Mammary epithelial cell (primary cell): ENCODE measurements at regions of chr11 and their contacts with region 1.

Region 1: GRCh38 chr11:2151500-2152257 is 9.3 kb downstream of the INS start:
- DNase-seq: peak; percentile 36
- H3K4me3 ChIP-seq: no peak overlapping the region
- H3K27ac ChIP-seq: no peak overlapping the region
- H3K4me1 ChIP-seq: no peaks in the 10 kb centered on the region
- H3K27me3 ChIP-seq: peaks cover 32% of the 10 kb centered on the region
- CTCF ChIP-seq: peak; percentile 81

Region 2: GRCh38 chr11:1598816-1599215 is 552.9 kb before region 1 on chr11:
- CTCF ChIA-PET with region 1: interaction called, 6 read pairs
- dilution Hi-C with region 1: no loop called
- in situ Hi-C with region 1: no loop called
- intact Hi-C with region 1: loop called (anchors 1 kb)
- DNase-seq: no peak
- H3K4me3 ChIP-seq: no peak overlapping the region
- H3K27ac ChIP-seq: no peak overlapping the region
- H3K4me1 ChIP-seq: no peaks in the 10 kb centered on the region
- H3K27me3 ChIP-seq: peaks cover 2% of the 10 kb centered on the region
- CTCF ChIP-seq: no peak

Region 3: DNA sequence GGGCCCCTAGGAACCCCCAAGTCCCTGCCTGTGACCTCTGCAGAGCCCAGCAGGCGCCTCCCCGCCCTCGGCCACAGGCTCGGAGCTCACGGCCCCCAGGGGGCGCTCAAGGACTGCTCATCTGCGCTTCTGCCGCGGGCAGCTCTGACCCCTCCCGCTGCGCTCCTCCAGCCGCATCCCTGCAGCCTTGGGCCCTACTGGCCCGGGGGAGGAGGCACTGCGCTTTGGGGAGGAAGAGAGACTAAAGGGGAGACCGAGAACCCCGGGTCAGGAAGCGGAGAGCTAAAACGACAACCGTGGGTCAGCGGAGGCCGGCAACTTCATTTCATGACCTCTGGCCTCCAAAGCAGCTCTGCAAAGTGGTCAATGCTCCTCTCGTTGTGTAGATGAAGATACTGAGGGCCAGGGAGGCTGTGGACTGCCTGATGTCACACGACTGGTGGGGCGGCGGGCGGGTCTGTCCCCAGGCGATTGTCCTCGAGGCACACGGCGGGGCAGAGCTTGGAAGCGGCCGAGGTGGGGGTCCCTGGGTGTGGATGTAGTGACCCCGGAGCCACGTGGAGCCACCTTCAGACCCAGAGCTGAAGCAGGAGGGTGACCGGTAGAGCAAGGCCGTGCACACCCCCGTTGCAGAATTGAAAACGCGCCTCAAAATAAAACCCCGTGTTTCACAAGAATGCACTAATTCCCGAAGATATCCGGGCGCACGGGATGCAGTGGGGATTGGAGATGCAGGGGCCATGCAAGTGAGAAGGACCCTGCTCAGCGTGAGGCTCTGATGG is 457.4 kb before region 1 on chr11:
- CTCF ChIA-PET with region 1: interaction called, 5 read pairs
- dilution Hi-C with region 1: no loop called
- in situ Hi-C with region 1: loop called in 1 of 2 experiments (anchors 25 kb)
- intact Hi-C with region 1: loop called (anchors 1 kb)
- DNase-seq: peak; percentile 58
- H3K4me3 ChIP-seq: peak overlapping the region in 2 of 3 experiments; percentile 49 to 54
- H3K27ac ChIP-seq: no peak overlapping the region
- H3K4me1 ChIP-seq: peaks cover 14% of the 10 kb centered on the region
- H3K27me3 ChIP-seq: peaks cover 8% of the 10 kb centered on the region
- CTCF ChIP-seq: peak; percentile 72 to 92

Region 4: GRCh38 chr11:1852877-1853276 is 298.8 kb before region 1 on chr11 and contains the start of gene LSP1:
- CTCF ChIA-PET with region 1: no interaction called
- dilution Hi-C with region 1: no loop called
- in situ Hi-C with region 1: loop called in 1 of 2 experiments (anchors 10 kb)
- intact Hi-C with region 1: no loop called
- DNase-seq: no peak
- H3K4me3 ChIP-seq: no peak within 1 kb of the TSS
- H3K27ac ChIP-seq: no peak within 1 kb of the TSS
- H3K4me1 ChIP-seq: no peaks in the 10 kb centered on the region
- H3K27me3 ChIP-seq: no peaks in the 10 kb centered on the region
- CTCF ChIP-seq: no peak
- total RNA-seq, gene LSP1: 0.17 to 2.0 TPM

Region 5: GRCh38 chr11:2036863-2037486 is 114.7 kb before region 1 on chr11:
- CTCF ChIA-PET with region 1: interaction called, 26 read pairs
- dilution Hi-C with region 1: no loop called
- in situ Hi-C with region 1: no loop called
- intact Hi-C with region 1: no loop called
- DNase-seq: no peak
- H3K4me3 ChIP-seq: no peak overlapping the region
- H3K27ac ChIP-seq: no peak overlapping the region
- H3K4me1 ChIP-seq: no peaks in the 10 kb centered on the region
- H3K27me3 ChIP-seq: no peaks in the 10 kb centered on the region
- CTCF ChIP-seq: no peak

Region 6: GRCh38 chr11:2383852-2384804 is 232.4 kb after region 1 on chr11:
- CTCF ChIA-PET with region 1: interaction called, 12 read pairs
- dilution Hi-C with region 1: no loop called
- in situ Hi-C with region 1: no loop called
- intact Hi-C with region 1: no loop called
- DNase-seq: no peak
- H3K4me3 ChIP-seq: peak overlapping the region in 1 of 3 experiments; percentile 1
- H3K27ac ChIP-seq: no peak overlapping the region
- H3K4me1 ChIP-seq: peaks cover 67% of the 10 kb centered on the region
- H3K27me3 ChIP-seq: no peaks in the 10 kb centered on the region
- CTCF ChIP-seq: no peak